Gastrocnemius medialis (tissue), 4 donors: ENCODE measurements at regions of chr14 and their contacts with region 1.

Region 1: GRCh38 chr14:91060351-91061055 is at the start of gene RPS6KA5:
- DNase-seq: peak; percentile 100
- ATAC-seq: peak; percentile 94 to 95
- H3K4me3 ChIP-seq: peak within 1 kb of the TSS; percentile 73 to 94 (median 87)
- H3K27ac ChIP-seq: peak within 1 kb of the TSS; percentile 96 to 98 (median 96)
- H3K4me1 ChIP-seq: peaks cover 24 to 28% of the 10 kb centered on the region in 2 donors
- H3K27me3 ChIP-seq: no peaks in the 10 kb centered on the region
- CTCF ChIP-seq: peak; percentile 27 to 79 (median 48)
- POLR2A ChIP-seq: peak; percentile 91 to 97
- total RNA-seq, gene RPS6KA5: 5.8 to 18.4 (median 9.8) TPM

Region 2: GRCh38 chr14:90827916-90828610 is 232.4 kb before region 1 on chr14:
- in situ Hi-C with region 1: no loop called
- intact Hi-C with region 1: loop called (anchors 10 kb)
- DNase-seq: peak; percentile 90 to 94
- ATAC-seq: peak; percentile 98 to 99
- H3K4me3 ChIP-seq: peak overlapping the region; percentile 45 to 72 (median 57)
- H3K27ac ChIP-seq: peak overlapping the region; percentile 75 to 89 (median 83)
- H3K4me1 ChIP-seq: peaks cover 12 to 14% of the 10 kb centered on the region in 2 donors
- H3K27me3 ChIP-seq: no peaks in the 10 kb centered on the region
- CTCF ChIP-seq: no peak
- POLR2A ChIP-seq: peak; percentile 55 to 77

Region 3: DNA sequence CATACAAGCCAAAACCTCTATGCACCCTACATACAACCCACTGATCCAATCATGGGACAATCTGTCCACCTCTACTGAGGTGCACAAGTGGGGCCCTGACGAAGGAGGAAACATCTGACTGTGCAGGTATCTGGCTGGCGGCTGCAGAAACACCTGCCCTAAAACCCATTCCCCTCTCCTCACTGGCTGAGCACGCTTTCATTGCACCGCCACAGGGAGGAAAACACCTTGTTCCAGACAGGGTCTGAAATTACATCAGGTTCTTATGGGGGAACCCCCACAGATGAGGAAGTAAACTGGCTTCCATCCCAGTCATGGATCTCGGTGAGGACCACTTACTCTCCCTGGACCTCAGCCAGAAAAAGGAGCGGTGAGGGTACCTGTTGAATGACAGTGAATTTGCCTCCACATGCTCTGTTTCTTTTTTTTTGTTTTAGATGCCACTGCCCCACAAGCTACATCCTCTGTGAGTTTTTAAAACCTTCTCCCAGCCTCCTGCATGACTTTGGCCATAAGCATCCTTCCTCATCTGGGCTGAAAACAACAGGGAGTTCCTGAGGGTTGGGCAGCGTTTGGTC is 29.5 kb after region 1 on chr14:
- in situ Hi-C with region 1: no loop called
- intact Hi-C with region 1: loop called (anchors 1 kb)
- DNase-seq: no peak
- ATAC-seq: no peak
- H3K4me3 ChIP-seq: no peak overlapping the region
- H3K27ac ChIP-seq: no peak overlapping the region
- H3K4me1 ChIP-seq: peaks cover 9 to 19% of the 10 kb centered on the region in 2 donors
- H3K27me3 ChIP-seq: no peaks in the 10 kb centered on the region
- CTCF ChIP-seq: no peak
- POLR2A ChIP-seq: no peak

Region 4: GRCh38 chr14:91127401-91127854 is 66.9 kb after region 1 on chr14:
- in situ Hi-C with region 1: no loop called
- intact Hi-C with region 1: loop called (anchors 5 kb)
- DNase-seq: peak; percentile 85 to 96
- ATAC-seq: peak; percentile 80 to 85
- H3K4me3 ChIP-seq: peak overlapping the region in 1 of 4 donors; percentile 2
- H3K27ac ChIP-seq: peak overlapping the region; percentile 97 to 100 (median 100)
- H3K4me1 ChIP-seq: peaks cover 38% of the 10 kb centered on the region in 2 donors
- H3K27me3 ChIP-seq: no peaks in the 10 kb centered on the region
- CTCF ChIP-seq: no peak
- POLR2A ChIP-seq: no peak

Region 5: DNA sequence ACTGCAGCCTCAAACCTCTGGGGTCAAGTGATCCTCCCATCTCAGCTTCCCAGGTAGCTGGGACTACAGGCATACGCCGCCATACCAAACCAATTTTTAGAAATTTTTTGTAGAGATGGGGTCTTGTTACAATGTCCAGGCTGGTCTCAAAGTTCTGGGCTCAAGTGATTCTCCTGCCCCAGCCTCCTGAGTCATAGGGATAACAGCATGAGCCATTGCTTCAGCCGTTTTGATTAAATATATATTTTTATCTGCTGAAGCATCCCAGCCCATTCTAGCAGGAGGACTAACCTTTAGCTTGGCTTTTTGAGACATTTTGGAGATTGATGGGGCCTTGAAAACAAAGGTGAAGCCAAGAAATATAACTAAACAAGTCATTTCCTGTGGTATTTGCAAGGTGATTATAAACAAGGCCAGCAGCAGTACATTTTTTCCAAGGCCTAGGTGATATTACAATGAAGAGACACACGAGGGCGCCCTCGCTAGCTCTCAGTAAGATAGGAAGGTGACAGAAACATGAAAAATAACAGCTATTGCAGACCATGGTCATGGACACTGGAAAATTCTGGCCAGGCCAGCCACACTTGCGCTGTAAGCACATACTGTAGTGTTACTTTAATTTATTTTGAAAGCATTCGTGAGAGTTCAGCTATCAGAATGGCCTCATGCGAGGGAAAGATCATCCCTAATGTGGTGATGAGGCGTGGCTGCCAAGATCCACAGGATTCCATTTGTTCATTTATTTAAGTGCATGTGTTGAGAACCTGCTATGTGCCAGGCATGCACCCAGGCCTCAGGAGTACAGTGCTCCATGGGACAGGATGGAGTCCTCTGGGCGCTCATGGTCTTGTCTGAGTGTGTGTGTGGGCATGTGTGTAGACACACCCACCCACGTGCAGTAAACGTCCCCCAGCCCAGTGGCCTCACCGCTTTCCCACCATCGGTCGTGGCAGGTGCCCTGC is 116.9 kb after region 1 on chr14:
- in situ Hi-C with region 1: loop called in 3 of 4 experiments (anchors 5 to 10 kb)
- intact Hi-C with region 1: loop called (anchors 1 kb)
- DNase-seq: no peak
- ATAC-seq: no peak
- H3K4me3 ChIP-seq: no peak overlapping the region
- H3K27ac ChIP-seq: peak overlapping the region in 3 of 4 donors; percentile 5 to 40 (median 27)
- H3K4me1 ChIP-seq: peaks cover 4 to 8% of the 10 kb centered on the region in 2 donors
- H3K27me3 ChIP-seq: no peaks in the 10 kb centered on the region
- CTCF ChIP-seq: peak; percentile 23 to 72 (median 60)
- POLR2A ChIP-seq: no peak